ENCODE measurements at regions of chr19 and their contacts with region 1.

Region 1: GRCh38 chr19:44582581-44583265 is 30.6 kb upstream of the IGSF23 start:
- DNase-seq: peak; percentile 86
- ATAC-seq: peak; percentile 93
- H3K4me3 Mint-ChIP-seq: no peak overlapping the region
- H3K27ac Mint-ChIP-seq: no peak overlapping the region
- H3K4me1 Mint-ChIP-seq: peaks cover 3% of the 10 kb centered on the region
- H3K27me3 Mint-ChIP-seq: peaks cover 15% of the 10 kb centered on the region
- CTCF ChIP-seq: peak; percentile 85

Region 2: GRCh38 chr19:44552324-44552723 is 30.4 kb before region 1 on chr19:
- CTCF ChIA-PET with region 1: interaction called, 13 read pairs
- POLR2A ChIA-PET with region 1: no interaction called
- DNase-seq: peak; percentile 95
- ATAC-seq: peak; percentile 99
- H3K4me3 Mint-ChIP-seq: no peak overlapping the region
- H3K27ac Mint-ChIP-seq: no peak overlapping the region
- H3K4me1 Mint-ChIP-seq: no peaks in the 10 kb centered on the region
- H3K27me3 Mint-ChIP-seq: peaks cover 16% of the 10 kb centered on the region
- CTCF ChIP-seq: peak; percentile 79

Region 3: DNA sequence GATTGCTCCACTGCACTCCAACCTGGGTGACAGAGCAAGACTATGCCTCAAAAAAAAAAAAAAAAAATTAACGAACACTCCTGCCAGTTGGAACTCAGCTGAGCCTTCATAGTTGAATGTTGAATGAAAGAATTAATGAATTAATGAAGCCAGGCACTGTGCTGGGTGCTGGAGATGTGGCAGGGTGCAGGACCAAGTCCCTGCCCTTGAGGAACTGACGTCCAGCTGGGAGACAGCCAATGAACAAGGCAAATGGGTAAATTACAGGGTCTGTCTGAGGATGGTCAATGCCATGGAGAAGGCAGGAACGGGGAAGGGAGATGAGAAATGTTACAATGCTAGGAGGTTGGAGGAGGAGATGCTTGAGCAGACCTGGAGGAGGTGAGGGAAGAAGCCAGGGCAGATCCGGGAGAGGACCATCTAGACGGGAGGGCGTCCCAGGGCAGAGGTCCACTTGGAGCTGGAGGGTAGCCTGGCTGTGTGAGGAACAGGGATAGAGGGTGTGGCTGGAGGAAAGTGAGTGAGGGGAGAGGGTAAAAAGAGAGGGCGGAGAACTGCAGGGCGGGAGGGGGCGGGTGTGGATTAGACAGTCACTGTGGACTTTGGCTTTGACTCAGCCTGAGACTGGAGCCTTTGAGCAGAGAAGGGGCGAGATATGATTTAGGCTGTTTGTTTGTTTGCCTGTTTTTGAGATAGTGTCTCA is 13.9 kb after region 1 on chr19:
- CTCF ChIA-PET with region 1: interaction called, 18 read pairs
- POLR2A ChIA-PET with region 1: no interaction called
- DNase-seq: no peak
- ATAC-seq: peak; percentile 65
- H3K4me3 Mint-ChIP-seq: no peak overlapping the region
- H3K27ac Mint-ChIP-seq: no peak overlapping the region
- H3K4me1 Mint-ChIP-seq: peaks cover 14% of the 10 kb centered on the region
- H3K27me3 Mint-ChIP-seq: peaks cover 5% of the 10 kb centered on the region
- CTCF ChIP-seq: no peak